Spleen (tissue), 13 donors: ENCODE measurements at regions of chr7 and their contacts with region 1.

Region 1: GRCh38 chr7:105759670-105760550 is 116.5 kb downstream of the ATXN7L1 start:
- DNase-seq: no peak
- H3K4me3 ChIP-seq: no peak overlapping the region
- H3K27ac ChIP-seq: no peak overlapping the region
- H3K4me1 ChIP-seq: peaks cover 0 to 19% (median 9%) of the 10 kb centered on the region in 6 donors
- H3K27me3 ChIP-seq: no peaks in the 10 kb centered on the region
- CTCF ChIP-seq: peak in 8 of 11 experiments; percentile 11 to 51 (median 32)
- POLR2A ChIP-seq: no peak

Region 2: GRCh38 chr7:105046414-105046813 is 713.5 kb before region 1 on chr7:
- intact Hi-C with region 1: no loop called
- DNase-seq: no peak
- H3K4me3 ChIP-seq: no peak overlapping the region
- H3K27ac ChIP-seq: no peak overlapping the region
- H3K4me1 ChIP-seq: peaks cover 0 to 82% (median 34%) of the 10 kb centered on the region in 6 donors
- H3K27me3 ChIP-seq: no peaks in the 10 kb centered on the region
- CTCF ChIP-seq: no peak
- POLR2A ChIP-seq: no peak

Region 3: GRCh38 chr7:106009403-106010226 is 249.7 kb after region 1 on chr7:
- intact Hi-C with region 1: loop called (anchors 5 kb)
- DNase-seq: peak; percentile 93
- H3K4me3 ChIP-seq: no peak overlapping the region
- H3K27ac ChIP-seq: peak overlapping the region in 2 of 8 donors; percentile 2 to 4
- H3K4me1 ChIP-seq: peaks cover 5 to 17% (median 12%) of the 10 kb centered on the region in 6 donors
- H3K27me3 ChIP-seq: no peaks in the 10 kb centered on the region
- CTCF ChIP-seq: peak; percentile 84 to 99 (median 95)
- POLR2A ChIP-seq: no peak

Region 4: DNA sequence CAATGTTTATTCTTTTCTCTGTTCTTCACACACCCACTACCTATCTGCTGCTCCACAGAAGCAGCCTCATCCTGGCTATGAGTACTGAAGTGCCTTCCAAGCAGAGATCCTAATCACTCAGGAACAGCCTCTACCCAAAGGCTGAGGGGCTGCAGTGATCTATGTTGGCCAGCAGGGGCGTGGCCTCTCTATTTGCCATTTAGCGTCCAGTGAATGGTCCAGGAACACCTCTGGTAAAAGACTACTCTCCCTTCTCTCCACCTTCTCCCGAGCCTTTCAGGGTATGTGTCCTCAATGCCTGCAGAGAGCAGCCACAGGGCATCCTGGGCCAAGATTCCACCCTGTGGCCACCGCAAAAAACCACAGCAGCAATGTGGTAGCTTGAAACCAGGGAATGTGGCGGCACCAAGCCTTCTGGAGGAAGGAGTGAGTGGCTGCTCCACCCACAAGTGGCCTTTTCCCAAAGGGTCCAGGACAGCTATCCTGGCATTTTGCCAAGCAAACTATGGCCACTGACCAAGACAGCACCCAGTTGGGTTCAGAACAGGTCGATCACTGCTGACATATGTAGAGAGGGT is 281.3 kb after region 1 on chr7:
- intact Hi-C with region 1: loop called (anchors 10 kb)
- DNase-seq: no peak
- H3K4me3 ChIP-seq: no peak overlapping the region
- H3K27ac ChIP-seq: no peak overlapping the region
- H3K4me1 ChIP-seq: peaks cover 4 to 25% (median 14%) of the 10 kb centered on the region in 6 donors
- H3K27me3 ChIP-seq: peaks cover 0 to 21% (median 0%) of the 10 kb centered on the region in 7 donors
- CTCF ChIP-seq: peak; percentile 44 to 85 (median 72)
- POLR2A ChIP-seq: no peak